Panc1 (cell line): ENCODE measurements at regions of chr19 and their contacts with region 1.

Region 1: GRCh38 chr19:4267101-4267900 is 11.8 kb upstream of the SHD start:
- DNase-seq: peak; percentile 58
- ATAC-seq: peak; percentile 95
- H3K4me3 ChIP-seq: no peak overlapping the region
- H3K27ac ChIP-seq: no peak overlapping the region
- H3K4me1 ChIP-seq: no peaks in the 10 kb centered on the region
- H3K27me3 ChIP-seq: no peaks in the 10 kb centered on the region
- CTCF ChIP-seq: peak; percentile 86

Region 2: DNA sequence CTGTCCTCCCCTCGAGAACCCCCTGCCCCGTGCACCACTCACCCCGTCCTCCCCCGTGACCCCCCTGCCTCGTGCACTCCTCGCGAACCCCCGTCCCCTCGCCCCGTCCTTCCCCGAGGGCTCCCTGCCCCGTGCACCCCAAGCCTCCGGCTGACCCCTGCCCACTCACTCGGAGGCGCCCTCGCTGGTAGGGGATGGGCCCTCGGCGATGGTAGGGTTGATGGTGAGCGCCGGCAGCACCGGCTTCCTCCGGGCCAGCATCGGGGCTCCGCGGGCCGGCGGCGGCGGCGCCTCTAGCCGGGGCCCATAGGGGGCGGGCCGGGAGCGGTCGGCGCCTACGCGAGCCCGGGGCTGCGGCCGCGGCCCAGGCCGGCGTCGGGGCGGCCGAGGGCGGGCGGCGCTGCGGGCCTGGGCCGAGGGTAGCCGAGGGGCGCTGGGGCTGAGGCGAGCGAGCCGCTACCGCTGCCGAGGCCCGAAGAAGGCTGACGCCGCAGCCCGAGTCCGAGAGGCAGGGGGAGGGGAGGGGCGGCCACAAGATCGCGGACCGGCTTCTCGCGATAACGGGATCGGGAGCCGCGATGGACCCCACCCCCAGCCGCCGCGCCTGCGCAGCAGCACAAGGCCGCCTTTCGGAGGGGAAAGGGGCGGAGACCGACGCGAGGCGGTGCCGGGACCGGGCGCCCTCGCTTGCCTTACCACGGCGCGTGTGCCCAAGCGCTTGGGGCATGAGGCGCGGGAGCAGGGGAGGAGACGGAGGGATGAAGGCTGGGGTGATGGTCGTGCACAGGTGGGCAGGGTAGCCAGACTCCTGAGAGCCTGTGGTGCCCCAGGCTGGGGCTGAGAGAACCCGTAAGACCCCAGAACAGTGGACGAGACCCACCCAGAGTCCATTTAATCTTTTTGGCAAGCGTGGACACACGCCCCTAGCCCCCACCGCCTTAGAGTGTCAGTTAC is 143.4 kb before region 1 on chr19 and contains the start of gene MAP2K2:
- CTCF ChIA-PET with region 1: no interaction called
- POLR2A ChIA-PET with region 1: no interaction called
- in situ Hi-C with region 1: no loop called
- intact Hi-C with region 1: no loop called
- DNase-seq: no peak
- ATAC-seq: peak; percentile 94
- H3K4me3 ChIP-seq: peak within 1 kb of the TSS; percentile 80 to 83
- H3K27ac ChIP-seq: peak within 1 kb of the TSS; percentile 93
- H3K4me1 ChIP-seq: peaks cover 12% of the 10 kb centered on the region; the same call in 1 of the 2 replicates
- H3K27me3 ChIP-seq: no peaks in the 10 kb centered on the region
- CTCF ChIP-seq: no peak
- total RNA-seq, gene MAP2K2: 151 TPM

Region 3: DNA sequence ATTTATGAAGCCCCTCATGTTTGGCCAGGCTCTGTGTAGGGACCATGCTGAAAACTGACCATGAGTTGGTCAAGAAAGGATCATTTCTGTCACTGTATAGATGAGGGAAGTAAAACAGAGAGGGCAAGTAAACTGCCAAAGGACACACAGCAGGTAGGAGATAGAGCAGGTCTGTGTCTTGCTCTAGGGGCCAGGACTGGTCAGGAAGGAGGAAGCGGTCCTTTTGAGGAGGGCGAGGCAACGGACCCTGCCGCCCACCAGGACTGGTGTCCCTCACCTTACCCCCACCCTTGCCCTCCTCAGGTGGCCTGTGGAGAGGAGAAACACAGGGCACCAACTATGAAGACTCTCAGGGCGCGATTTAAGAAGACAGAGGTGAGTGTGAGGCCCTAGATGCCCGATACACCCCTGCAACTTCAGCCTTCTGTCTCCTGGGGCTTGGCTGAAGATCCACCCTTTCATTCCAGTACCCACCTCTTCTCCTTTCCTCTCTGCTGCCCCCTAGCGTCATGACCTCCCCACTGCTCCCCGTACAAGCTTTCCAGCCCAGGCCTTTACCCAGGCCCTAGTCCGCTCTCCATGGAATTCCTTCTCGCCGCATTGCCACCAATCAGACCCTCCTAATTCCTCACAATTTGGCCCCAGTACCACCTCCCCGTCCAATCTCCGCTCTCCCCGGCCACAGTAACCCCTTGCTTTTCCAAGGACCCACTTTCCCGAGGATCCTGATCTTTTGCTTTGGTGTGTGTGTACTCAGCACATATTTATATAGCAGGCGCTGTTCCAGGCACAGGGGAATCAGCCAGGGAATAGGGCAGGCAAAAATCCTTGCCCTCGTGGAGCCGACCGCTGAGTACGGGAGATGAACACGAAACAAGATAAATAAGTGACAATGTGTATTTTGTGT is 81.0 kb before region 1 on chr19:
- CTCF ChIA-PET with region 1: no interaction called
- POLR2A ChIA-PET with region 1: no interaction called
- in situ Hi-C with region 1: no loop called
- intact Hi-C with region 1: no loop called
- DNase-seq: no peak
- ATAC-seq: peak; percentile 80; the same call in 1 of the 2 replicates
- H3K4me3 ChIP-seq: no peak overlapping the region
- H3K27ac ChIP-seq: no peak overlapping the region
- H3K4me1 ChIP-seq: no peaks in the 10 kb centered on the region; the same call in none of the 2 replicates
- H3K27me3 ChIP-seq: no peaks in the 10 kb centered on the region
- CTCF ChIP-seq: peak; percentile 89

Region 4: GRCh38 chr19:4256563-4256962 is 10.7 kb before region 1 on chr19:
- CTCF ChIA-PET with region 1: no interaction called
- POLR2A ChIA-PET with region 1: no interaction called
- in situ Hi-C with region 1: no loop called
- intact Hi-C with region 1: no loop called
- DNase-seq: no peak
- ATAC-seq: no peak; the same call in 1 of the 2 replicates
- H3K4me3 ChIP-seq: no peak overlapping the region
- H3K27ac ChIP-seq: no peak overlapping the region
- H3K4me1 ChIP-seq: no peaks in the 10 kb centered on the region
- H3K27me3 ChIP-seq: no peaks in the 10 kb centered on the region
- CTCF ChIP-seq: no peak

Region 5: GRCh38 chr19:4342615-4343369 is 75.5 kb after region 1 on chr19:
- CTCF ChIA-PET with region 1: interaction called, 11 read pairs
- POLR2A ChIA-PET with region 1: no interaction called
- in situ Hi-C with region 1: no loop called
- intact Hi-C with region 1: no loop called
- DNase-seq: peak; percentile 99
- ATAC-seq: peak; percentile 94
- H3K4me3 ChIP-seq: peak overlapping the region; percentile 66 to 81
- H3K27ac ChIP-seq: peak overlapping the region; percentile 85
- H3K4me1 ChIP-seq: peaks cover 4% of the 10 kb centered on the region
- H3K27me3 ChIP-seq: no peaks in the 10 kb centered on the region
- CTCF ChIP-seq: no peak

Region 6: GRCh38 chr19:4352701-4353121 is 85.4 kb after region 1 on chr19:
- CTCF ChIA-PET with region 1: interaction called, 15 read pairs
- POLR2A ChIA-PET with region 1: no interaction called
- in situ Hi-C with region 1: no loop called
- intact Hi-C with region 1: loop called (anchors 2 kb)
- DNase-seq: no peak
- ATAC-seq: peak; percentile 66; the same call in 1 of the 2 replicates
- H3K4me3 ChIP-seq: no peak overlapping the region
- H3K27ac ChIP-seq: no peak overlapping the region
- H3K4me1 ChIP-seq: no peaks in the 10 kb centered on the region
- H3K27me3 ChIP-seq: no peaks in the 10 kb centered on the region
- CTCF ChIP-seq: peak; percentile 86